ENCODE measurements at regions of chr12 and their contacts with region 1.

Region 1: DNA sequence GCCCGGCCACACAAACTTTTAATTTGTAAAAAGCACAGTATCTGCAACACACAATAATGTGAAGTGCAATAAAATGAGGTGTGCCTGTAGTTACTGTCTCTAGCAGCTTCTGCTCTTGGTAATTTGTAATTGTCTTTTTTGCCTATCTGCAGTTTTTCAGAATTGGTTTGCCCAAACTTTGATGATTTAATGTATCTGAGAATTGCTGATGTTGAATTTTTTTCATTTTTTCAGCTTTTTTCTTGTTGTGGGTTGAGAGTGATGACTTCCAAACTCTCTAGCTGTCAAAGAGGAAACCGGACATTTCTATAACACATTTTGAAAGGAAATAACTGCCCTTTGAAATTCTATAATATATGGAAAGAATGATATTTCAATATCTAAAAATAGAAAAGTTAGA is 236.9 kb downstream of the RERGL start:
- DNase-seq: no peak

Region 2: DNA sequence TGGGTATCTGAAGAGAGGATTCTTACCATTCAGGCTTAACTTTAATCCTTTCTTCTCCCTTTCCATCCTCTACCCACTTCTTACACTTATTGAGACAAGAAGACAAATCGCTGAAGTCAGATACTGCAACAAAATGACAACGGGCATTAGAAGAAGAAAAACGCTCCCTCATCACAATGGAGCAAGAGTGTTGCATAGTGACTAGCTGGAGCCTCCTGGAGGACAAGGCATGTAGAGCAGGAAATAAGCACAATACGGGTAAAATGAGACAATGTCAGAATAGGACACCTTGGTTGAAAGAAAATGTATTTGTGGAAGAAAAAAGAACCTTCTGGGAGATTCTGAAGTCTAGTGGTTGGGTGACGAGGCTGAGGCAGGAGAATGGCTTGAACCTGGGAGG is 264.1 kb before region 1 on chr12:
- intact Hi-C with region 1: no loop called
- DNase-seq: peak in 1 of 42 donors; percentile 4

Region 3: DNA sequence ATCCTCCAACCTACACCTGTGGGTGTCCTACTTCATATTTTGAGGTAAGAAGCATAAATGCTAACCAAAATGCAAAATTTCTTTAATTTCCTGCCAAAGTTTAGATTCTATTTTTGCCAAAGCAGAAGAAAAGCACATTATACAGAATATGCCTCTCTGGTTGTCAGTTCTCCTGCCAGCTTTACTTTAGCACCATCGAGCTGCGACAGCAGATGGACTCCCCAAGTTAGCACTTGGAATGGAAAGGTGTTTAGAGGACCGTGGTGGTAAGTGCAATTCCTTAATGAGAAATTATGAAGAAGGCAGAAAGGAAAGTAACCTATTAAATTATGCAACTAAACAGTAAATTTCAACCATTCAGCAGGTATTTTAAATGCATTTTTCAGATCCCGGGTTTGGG is 89.7 kb before region 1 on chr12:
- intact Hi-C with region 1: loop called (anchors 5 kb)
- DNase-seq: no peak

Measured in head of caudate nucleus (tissue), 42 donors.